ENCODE measurements at regions of chr10 and their contacts with region 1.

Region 1: GRCh38 chr10:6647811-6648526 is 67.9 kb upstream of the PRKCQ start:
- DNase-seq: peak; percentile 81
- H3K4me3 Mint-ChIP-seq: no peak overlapping the region
- H3K27ac Mint-ChIP-seq: peak overlapping the region; percentile 56
- H3K4me1 Mint-ChIP-seq: peaks cover 61% of the 10 kb centered on the region
- H3K27me3 Mint-ChIP-seq: no peaks in the 10 kb centered on the region

Region 2: GRCh38 chr10:6445501-6446316 is 202.3 kb before region 1 on chr10:
- CTCF ChIA-PET with region 1: interaction called, 9 read pairs
- POLR2A ChIA-PET with region 1: no interaction called
- intact Hi-C with region 1: loop called (anchors 1 kb)
- DNase-seq: peak; percentile 76
- H3K4me3 Mint-ChIP-seq: no peak overlapping the region
- H3K27ac Mint-ChIP-seq: peak overlapping the region; percentile 58
- H3K4me1 Mint-ChIP-seq: peaks cover 39% of the 10 kb centered on the region
- H3K27me3 Mint-ChIP-seq: no peaks in the 10 kb centered on the region

Region 3: DNA sequence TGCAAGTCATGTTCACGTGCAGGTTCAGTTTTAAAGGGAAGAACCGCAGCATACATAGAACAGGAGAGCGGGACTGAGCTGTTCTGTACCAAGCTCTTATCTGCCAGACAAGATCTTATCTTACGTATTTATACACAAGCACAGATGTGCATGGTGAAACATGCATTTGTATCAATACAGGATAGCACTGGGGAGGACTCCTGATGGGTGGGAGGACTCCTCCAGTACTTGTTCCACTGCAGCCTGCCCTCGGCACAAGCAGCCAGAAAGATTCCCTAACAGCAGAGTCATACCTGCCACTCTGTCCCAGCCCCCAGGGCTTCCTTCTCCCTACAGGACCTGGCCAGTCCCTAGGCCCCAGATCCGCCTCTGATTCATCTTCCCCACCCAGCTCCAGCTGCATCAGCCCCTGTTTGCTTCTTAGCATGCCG is 54.7 kb before region 1 on chr10:
- CTCF ChIA-PET with region 1: interaction called, 10 read pairs
- POLR2A ChIA-PET with region 1: interaction called, 4 read pairs
- intact Hi-C with region 1: no loop called
- DNase-seq: peak; percentile 44
- H3K4me3 Mint-ChIP-seq: peak overlapping the region; percentile 14
- H3K27ac Mint-ChIP-seq: peak overlapping the region; percentile 72
- H3K4me1 Mint-ChIP-seq: peaks cover 90% of the 10 kb centered on the region
- H3K27me3 Mint-ChIP-seq: no peaks in the 10 kb centered on the region

Region 4: GRCh38 chr10:6635784-6636183 is 12.2 kb before region 1 on chr10:
- CTCF ChIA-PET with region 1: interaction called, 6 read pairs
- POLR2A ChIA-PET with region 1: interaction called, 3 read pairs
- intact Hi-C with region 1: loop called (anchors 1 kb)
- DNase-seq: no peak
- H3K4me3 Mint-ChIP-seq: peak overlapping the region; percentile 5
- H3K27ac Mint-ChIP-seq: peak overlapping the region; percentile 72
- H3K4me1 Mint-ChIP-seq: peaks cover 34% of the 10 kb centered on the region
- H3K27me3 Mint-ChIP-seq: no peaks in the 10 kb centered on the region

Region 5: DNA sequence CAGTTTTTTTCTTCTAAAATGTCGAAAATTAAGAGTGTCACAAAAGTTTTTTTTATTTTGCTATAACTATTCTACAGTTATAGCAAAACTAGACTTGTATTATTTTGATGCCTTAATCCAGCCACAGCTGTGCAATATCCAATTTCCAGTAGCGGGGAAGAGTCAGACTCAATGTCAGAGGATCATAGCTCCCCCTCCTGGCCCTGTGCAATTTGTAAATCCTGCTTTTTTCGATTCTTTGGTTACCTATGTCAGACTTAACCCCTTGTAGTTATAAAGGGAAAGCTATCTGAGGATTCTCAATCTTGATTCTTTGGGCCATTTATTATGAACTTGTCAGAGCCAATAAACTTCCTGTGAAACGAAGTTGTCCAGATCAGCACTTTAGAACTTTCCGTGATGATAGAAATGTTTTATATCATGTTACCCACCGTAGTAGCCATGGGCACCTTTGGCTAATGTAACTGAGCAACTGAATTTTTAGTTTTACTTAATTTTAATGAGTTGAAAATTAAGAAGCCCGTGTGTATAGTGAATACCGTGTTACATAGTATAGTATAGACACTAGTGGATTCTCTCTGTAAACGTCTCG is 19.8 kb after region 1 on chr10:
- CTCF ChIA-PET with region 1: interaction called, 10 read pairs
- POLR2A ChIA-PET with region 1: interaction called, 6 read pairs
- intact Hi-C with region 1: loop called (anchors 1 kb)
- DNase-seq: peak; percentile 68
- H3K4me3 Mint-ChIP-seq: no peak overlapping the region
- H3K27ac Mint-ChIP-seq: peak overlapping the region; percentile 6
- H3K4me1 Mint-ChIP-seq: peaks cover 23% of the 10 kb centered on the region
- H3K27me3 Mint-ChIP-seq: no peaks in the 10 kb centered on the region